ENCODE measurements at regions of chr10 and their contacts with region 1.

Region 1: DNA sequence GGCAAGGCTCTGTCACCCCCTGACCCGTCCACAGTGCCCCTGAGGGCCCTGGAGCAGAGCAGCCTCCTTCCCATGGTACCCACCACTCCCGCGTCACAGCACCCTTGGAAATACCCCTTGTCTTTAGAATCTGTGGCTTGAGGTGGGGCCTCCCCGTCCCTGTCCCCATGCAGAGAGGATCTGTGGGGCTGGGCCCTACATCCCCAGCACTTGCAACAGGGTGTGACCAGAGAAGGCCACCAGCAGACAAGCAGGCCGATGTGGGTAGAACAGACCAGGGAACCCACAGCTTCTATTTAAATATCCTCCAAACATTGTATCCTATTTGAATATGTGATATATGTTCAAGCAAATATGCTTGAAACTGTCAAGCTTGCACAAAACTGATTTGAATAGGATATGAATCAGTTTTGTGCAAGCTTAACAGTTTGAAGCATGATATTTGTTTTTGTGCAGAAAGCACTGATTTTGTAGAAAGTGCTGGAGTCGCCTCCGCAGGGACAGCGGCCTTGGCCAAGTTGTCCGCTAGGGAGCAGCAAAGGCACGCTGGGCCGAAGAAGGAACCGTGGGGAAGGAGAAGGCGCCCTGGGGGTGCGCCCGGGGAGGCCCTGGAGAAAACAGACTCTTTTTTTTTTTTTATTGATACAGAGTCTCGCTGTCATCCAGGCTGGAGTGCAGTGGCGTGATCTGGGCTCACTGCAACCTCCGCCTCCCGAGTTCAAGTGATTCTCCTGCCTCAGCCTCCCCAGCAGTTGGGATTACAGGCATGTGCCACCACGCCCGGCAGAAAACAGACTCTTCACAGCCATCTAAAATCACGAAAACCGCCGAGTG is 2.2 kb downstream of the CFAP46 start:
- DNase-seq: no peak
- H3K4me3 ChIP-seq: no peak overlapping the region
- CTCF ChIP-seq: peak; percentile 88

Region 2: GRCh38 chr10:132926777-132927650 is 13.2 kb before region 1 on chr10:
- CTCF ChIA-PET with region 1: interaction called, 13 read pairs
- POLR2A ChIA-PET with region 1: no interaction called
- DNase-seq: no peak
- H3K4me3 ChIP-seq: no peak overlapping the region
- CTCF ChIP-seq: no peak

Region 3: DNA sequence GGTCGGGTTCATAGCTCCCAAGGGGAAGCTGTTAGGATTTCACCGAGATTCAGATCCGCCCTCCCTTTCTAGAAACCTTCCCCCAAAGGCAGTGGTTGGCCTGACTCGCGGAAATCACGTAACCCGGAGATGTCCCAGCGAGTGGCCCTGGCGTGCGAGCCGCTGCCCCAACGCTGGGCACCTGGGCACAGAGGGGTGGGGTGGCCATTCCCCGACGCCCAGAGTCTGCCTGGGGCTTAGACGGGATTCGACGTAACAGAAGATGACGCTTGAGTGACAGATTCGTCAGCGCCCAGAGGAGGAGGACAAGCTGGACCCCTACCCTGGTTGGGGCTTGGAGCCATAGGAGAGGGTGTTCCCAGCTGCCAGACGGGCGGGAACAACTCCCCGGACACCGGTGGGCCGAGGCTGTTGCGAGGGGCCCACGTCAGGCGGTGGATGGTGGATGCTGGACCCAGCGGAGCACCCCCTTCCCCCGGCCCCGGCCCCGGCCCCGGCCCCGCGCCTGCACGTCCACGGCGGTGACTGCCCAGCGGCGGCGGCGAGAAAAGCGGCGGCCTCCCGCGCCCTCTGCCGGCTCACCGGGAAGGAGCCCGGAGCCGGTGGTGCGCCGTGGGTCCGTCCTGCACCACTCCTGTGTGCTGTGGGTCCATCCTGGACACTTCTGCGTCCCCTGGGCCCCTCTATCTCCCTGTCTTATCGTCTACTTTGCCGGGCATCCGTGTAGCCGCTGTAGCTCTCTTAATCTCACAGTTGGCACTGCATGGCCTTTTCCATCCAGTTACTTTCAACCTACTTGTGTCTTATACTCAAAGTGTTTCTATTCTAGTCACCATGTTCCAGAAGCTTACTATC is 184.4 kb after region 1 on chr10:
- CTCF ChIA-PET with region 1: interaction called, 13 read pairs
- POLR2A ChIA-PET with region 1: no interaction called
- DNase-seq: no peak
- H3K4me3 ChIP-seq: no peak overlapping the region
- CTCF ChIP-seq: peak; percentile 67

Measured in AG04449 (cell line).